Sigmoid colon (tissue), 7 donors: ENCODE measurements at regions of chr19 and their contacts with region 1.

Region 1: DNA sequence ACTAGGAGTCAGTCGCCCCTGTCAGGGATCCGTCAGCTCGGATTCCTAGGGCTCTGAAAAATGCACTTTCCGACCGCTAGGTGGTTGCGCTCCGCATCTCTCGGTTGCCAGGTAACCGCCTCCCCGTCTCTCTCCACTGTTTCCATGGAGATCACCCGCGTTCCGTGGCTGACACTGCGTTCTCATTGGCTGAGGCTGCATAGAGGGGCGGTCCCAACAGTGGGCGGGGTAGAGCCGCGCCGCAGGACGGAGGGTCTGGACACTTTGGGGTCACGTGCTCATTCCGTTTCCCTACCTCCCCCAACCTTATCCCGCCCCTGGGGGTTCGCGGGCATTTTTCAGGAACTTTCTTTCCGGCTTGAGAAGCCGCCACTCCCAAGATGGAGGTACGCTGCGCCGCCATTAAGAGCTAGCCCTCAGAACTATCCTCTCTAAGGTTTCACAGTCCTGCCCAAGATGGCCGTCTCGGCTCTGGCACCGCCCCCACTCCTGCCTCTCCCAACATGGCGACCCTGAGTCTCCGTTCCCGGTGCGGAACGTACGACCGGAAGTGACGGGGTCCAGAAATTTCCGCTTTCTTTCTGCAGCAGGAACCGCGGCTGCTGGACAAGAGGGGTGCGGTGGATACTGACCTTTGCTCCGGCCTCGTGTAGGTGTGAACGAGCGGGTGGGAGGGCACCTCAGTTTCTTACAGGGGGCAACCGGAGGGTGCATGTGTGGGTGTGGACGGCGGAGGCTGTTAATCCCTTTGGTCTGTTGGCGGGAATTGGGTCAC is at the starts of genes ODAD3 and PRKCSH:
- DNase-seq: peak; percentile 100
- H3K4me3 ChIP-seq: peak within 1 kb of the TSS; percentile 54 to 82 (median 71)
- H3K27ac ChIP-seq: peak within 1 kb of the TSS; percentile 73 to 85 (median 78)
- H3K4me1 ChIP-seq: peaks cover 0 to 22% (median 19%) of the 10 kb centered on the region in 4 donors
- H3K27me3 ChIP-seq: no peaks in the 10 kb centered on the region
- CTCF ChIP-seq: peak; percentile 89 to 99 (median 96)
- EP300 ChIP-seq: peak in 1 of 4 donors; percentile 72
- POLR2A ChIP-seq: peak; percentile 17 to 37
- total RNA-seq, gene ODAD3: not detected
- total RNA-seq, gene PRKCSH: 57.6 to 98.0 (median 83.9) TPM

Region 2: DNA sequence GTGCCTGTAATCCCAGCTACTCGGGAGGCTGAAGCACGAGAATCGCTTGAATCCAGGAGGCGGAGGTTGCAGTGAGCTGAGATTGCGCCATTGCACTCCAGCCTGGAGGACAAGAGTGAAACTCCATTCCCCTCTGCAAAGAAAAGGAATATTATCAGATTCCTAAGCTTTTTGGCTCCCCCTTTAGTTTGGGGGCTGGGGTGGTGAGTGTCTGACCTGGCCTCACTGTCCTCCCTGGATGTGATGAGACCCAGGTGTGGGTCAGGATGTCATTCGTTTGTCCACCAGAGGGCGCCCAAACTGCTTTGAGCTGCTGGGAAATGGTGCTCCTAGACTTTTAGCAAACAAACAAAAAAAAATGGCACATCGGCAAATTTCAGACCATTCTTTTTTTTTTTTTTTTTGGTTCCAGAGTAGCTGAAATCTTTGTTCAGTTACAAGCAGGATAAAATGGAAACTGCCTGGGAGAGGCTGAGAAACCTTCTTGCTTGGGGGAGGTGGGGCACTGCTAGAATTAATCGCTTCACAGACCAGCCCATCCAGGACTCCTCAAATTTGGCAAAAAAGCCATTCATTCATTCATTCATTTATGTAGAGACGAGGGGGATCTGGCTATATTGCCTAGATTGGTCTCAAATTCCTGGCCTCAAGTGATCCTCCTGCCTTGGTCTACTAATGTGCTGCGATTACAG is 309.1 kb before region 1 on chr19:
- intact Hi-C with region 1: loop called (anchors 10 kb)
- DNase-seq: peak; percentile 94
- H3K4me3 ChIP-seq: no peak overlapping the region
- H3K27ac ChIP-seq: peak overlapping the region in 2 of 4 donors; percentile 28 to 44
- H3K4me1 ChIP-seq: peaks cover 0 to 16% (median 10%) of the 10 kb centered on the region in 4 donors
- H3K27me3 ChIP-seq: no peaks in the 10 kb centered on the region
- CTCF ChIP-seq: peak; percentile 68 to 79 (median 75)
- EP300 ChIP-seq: no peak
- POLR2A ChIP-seq: no peak

Region 3: GRCh38 chr19:11380653-11381534 is 54.4 kb before region 1 on chr19:
- intact Hi-C with region 1: loop called (anchors 1 kb)
- DNase-seq: peak; percentile 98
- H3K4me3 ChIP-seq: peak overlapping the region; percentile 57 to 68 (median 61)
- H3K27ac ChIP-seq: peak overlapping the region; percentile 74 to 84 (median 80)
- H3K4me1 ChIP-seq: peaks cover 0 to 72% (median 69%) of the 10 kb centered on the region in 4 donors
- H3K27me3 ChIP-seq: peaks cover 16 to 31% (median 30%) of the 10 kb centered on the region in 3 donors
- CTCF ChIP-seq: peak; percentile 76 to 85 (median 78)
- EP300 ChIP-seq: no peak
- POLR2A ChIP-seq: peak in 1 of 2 donors; percentile 67

Region 4: GRCh38 chr19:11505032-11505503 is 69.8 kb after region 1 on chr19:
- intact Hi-C with region 1: loop called (anchors 5 kb)
- DNase-seq: peak; percentile 99
- H3K4me3 ChIP-seq: peak overlapping the region; percentile 82 to 98 (median 90)
- H3K27ac ChIP-seq: peak overlapping the region; percentile 92 to 98 (median 98)
- H3K4me1 ChIP-seq: peaks cover 0 to 20% (median 11%) of the 10 kb centered on the region in 4 donors
- H3K27me3 ChIP-seq: no peaks in the 10 kb centered on the region
- CTCF ChIP-seq: no peak
- EP300 ChIP-seq: no peak
- POLR2A ChIP-seq: peak in 1 of 2 donors; percentile 11